Calu3 (cell line): ENCODE measurements at regions of chr19 and their contacts with region 1.

Region 1: GRCh38 chr19:8580710-8581281 is 3.6 kb upstream of the MYO1F start:
- DNase-seq: peak; percentile 73
- H3K4me3 Mint-ChIP-seq: no peak overlapping the region
- H3K27ac Mint-ChIP-seq: no peak overlapping the region
- H3K4me1 Mint-ChIP-seq: no peaks in the 10 kb centered on the region
- H3K27me3 Mint-ChIP-seq: peaks cover 31% of the 10 kb centered on the region
- CTCF ChIP-seq: peak; percentile 97

Region 2: GRCh38 chr19:8544168-8544567 is 36.6 kb before region 1 on chr19:
- CTCF ChIA-PET with region 1: no interaction called
- intact Hi-C with region 1: no loop called
- DNase-seq: no peak
- H3K4me3 Mint-ChIP-seq: no peak overlapping the region
- H3K27ac Mint-ChIP-seq: no peak overlapping the region
- H3K4me1 Mint-ChIP-seq: no peaks in the 10 kb centered on the region
- H3K27me3 Mint-ChIP-seq: no peaks in the 10 kb centered on the region
- CTCF ChIP-seq: no peak

Region 3: GRCh38 chr19:8592231-8593009 is 11.6 kb after region 1 on chr19:
- CTCF ChIA-PET with region 1: interaction called, 16 read pairs
- intact Hi-C with region 1: no loop called
- DNase-seq: no peak
- H3K4me3 Mint-ChIP-seq: no peak overlapping the region
- H3K27ac Mint-ChIP-seq: no peak overlapping the region
- H3K4me1 Mint-ChIP-seq: no peaks in the 10 kb centered on the region
- H3K27me3 Mint-ChIP-seq: peaks cover 51% of the 10 kb centered on the region
- CTCF ChIP-seq: no peak

Region 4: DNA sequence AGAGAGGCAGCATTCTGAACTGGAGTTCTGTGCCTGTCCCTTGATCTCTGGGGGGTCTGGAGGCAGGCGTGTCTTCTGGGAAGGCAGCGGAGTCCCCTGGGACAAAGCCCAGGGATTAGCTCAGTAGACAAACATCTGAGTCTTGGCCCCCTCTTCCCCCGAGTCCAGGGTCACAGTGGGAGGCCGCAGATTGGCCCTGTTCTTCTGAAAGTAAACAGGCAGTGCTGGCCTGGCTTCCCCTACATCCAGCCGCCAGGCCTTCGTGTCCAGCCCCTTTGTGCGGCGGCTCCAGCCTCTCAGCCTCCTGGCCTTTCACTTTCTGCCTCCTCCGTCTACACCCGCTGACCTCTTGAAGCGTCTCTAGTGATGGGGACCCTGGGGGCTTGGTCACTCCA is 50.6 kb after region 1 on chr19:
- CTCF ChIA-PET with region 1: no interaction called
- intact Hi-C with region 1: no loop called
- DNase-seq: no peak
- H3K4me3 Mint-ChIP-seq: no peak overlapping the region
- H3K27ac Mint-ChIP-seq: no peak overlapping the region
- H3K4me1 Mint-ChIP-seq: no peaks in the 10 kb centered on the region
- H3K27me3 Mint-ChIP-seq: no peaks in the 10 kb centered on the region
- CTCF ChIP-seq: no peak

Region 5: DNA sequence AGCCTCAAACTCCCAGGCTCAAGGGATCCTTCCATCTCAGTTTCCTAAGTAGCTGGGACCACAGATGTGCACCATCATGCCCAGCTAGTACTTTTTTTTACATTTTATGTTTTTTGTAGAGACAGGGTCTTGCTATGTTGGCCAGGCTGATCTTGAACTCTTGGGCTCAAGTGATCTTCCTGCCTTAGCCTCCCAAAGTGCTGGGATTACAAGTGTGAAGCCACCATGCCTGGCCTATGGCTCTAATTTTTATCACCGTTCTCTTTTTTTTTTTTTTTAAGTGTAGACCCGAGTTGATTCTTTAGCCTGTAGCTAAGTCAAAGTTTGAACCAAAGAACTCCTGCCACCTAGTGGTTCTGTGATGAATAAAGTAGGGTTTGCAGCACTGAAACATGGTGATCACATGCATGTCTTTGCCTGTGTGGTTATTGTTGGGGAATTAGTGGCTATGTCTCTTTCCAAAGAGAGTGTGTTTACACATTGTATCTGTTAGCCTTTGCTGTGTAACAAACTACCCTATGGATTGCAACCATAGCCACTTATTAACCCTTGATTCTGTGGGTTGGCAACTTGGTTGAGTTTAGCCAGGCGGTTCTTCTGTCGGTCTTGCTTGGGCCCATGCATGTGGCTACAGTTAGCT is 61.2 kb after region 1 on chr19:
- CTCF ChIA-PET with region 1: interaction called, 5 read pairs
- intact Hi-C with region 1: loop called (anchors 10 kb)
- DNase-seq: peak; percentile 32
- H3K4me3 Mint-ChIP-seq: no peak overlapping the region
- H3K27ac Mint-ChIP-seq: no peak overlapping the region
- H3K4me1 Mint-ChIP-seq: peaks cover 20% of the 10 kb centered on the region
- H3K27me3 Mint-ChIP-seq: peaks cover 35% of the 10 kb centered on the region
- CTCF ChIP-seq: peak; percentile 19